Activated CD4-positive, alpha-beta memory T cell treated with anti-CD3 and anti-CD28 coated beads, Interleukin-2, amount 10 ng/mL, durations not matched to agents 7 days and 5 days (primary cell): ENCODE measurements at regions of chr2 and their contacts with region 1.

Region 1: DNA sequence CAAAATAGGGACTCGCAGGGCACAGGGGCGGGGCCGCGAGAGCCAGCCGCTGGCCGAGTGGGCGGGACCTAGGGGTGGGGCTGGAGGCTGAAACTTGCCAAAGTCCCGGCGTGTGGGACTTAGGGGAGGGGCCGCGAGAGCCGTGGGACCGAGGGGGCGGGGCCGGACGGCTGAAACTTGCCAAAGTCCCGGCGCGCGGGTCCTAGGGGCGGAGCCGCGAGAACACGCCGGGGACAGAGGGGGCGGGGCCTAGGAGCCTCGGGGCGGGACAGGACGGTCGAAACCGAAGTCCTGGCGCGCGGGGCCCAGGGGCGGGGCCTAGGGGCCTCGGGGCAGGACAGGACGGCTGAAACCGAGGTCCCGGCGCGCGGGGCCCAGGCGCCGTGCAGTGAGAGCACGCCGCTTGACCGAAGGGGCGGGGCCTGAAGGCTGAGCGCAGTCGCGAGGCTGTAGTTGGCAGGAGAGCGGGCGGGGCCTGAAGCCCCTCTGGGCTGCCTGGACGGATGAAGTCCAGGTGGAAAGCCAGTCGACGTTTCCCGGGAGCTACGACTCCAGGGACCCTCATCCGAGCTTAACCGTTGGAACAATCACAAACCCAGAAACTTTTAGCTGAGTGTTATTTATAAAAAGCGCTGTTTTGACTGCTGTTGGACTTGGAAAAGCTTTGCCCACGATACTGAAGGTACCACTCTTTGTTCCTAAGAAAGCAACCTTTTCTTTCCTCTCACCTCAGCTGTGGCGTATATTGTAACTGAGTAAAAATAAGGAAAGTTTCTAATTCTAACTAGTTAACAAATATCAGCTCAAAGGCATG is 475 bp upstream of the BARD1 start:
- DNase-seq: peak; percentile 100
- H3K4me3 Mint-ChIP-seq: peak overlapping the region; percentile 98
- H3K27ac Mint-ChIP-seq: peak overlapping the region; percentile 93
- H3K4me1 Mint-ChIP-seq: peaks cover 38% of the 10 kb centered on the region
- H3K27me3 Mint-ChIP-seq: peaks cover 9% of the 10 kb centered on the region

Region 2: GRCh38 chr2:214782671-214783070 is 27.3 kb before region 1 on chr2:
- CTCF ChIA-PET with region 1: no interaction called
- POLR2A ChIA-PET with region 1: interaction called, 12 read pairs
- DNase-seq: no peak
- H3K4me3 Mint-ChIP-seq: no peak overlapping the region
- H3K27ac Mint-ChIP-seq: no peak overlapping the region
- H3K4me1 Mint-ChIP-seq: no peaks in the 10 kb centered on the region
- H3K27me3 Mint-ChIP-seq: no peaks in the 10 kb centered on the region

Region 3: GRCh38 chr2:214836568-214836967 is 26.6 kb after region 1 on chr2:
- CTCF ChIA-PET with region 1: no interaction called
- POLR2A ChIA-PET with region 1: no interaction called
- DNase-seq: no peak
- H3K4me3 Mint-ChIP-seq: no peak overlapping the region
- H3K27ac Mint-ChIP-seq: no peak overlapping the region
- H3K4me1 Mint-ChIP-seq: no peaks in the 10 kb centered on the region
- H3K27me3 Mint-ChIP-seq: no peaks in the 10 kb centered on the region

Region 4: GRCh38 chr2:214934006-214934405 is 124.0 kb after region 1 on chr2:
- CTCF ChIA-PET with region 1: no interaction called
- POLR2A ChIA-PET with region 1: no interaction called
- DNase-seq: no peak
- H3K4me3 Mint-ChIP-seq: no peak overlapping the region
- H3K27ac Mint-ChIP-seq: no peak overlapping the region
- H3K4me1 Mint-ChIP-seq: no peaks in the 10 kb centered on the region
- H3K27me3 Mint-ChIP-seq: no peaks in the 10 kb centered on the region